ENCODE measurements at regions of chr21 and their contacts with region 1.

Region 1: GRCh38 chr21:43646550-43647260 is 12.6 kb downstream of the HSF2BP start:
- DNase-seq: peak; percentile 90 to 91
- ATAC-seq: peak; percentile 92 to 98 (median 96)
- H3K4me3 ChIP-seq: no peak overlapping the region
- H3K27ac ChIP-seq: peak overlapping the region in 6 of 10 donors; percentile 46 to 73 (median 70)
- H3K4me1 ChIP-seq: peaks cover 0 to 25% (median 15%) of the 10 kb centered on the region in 9 donors
- H3K27me3 ChIP-seq: no peaks in the 10 kb centered on the region
- CTCF ChIP-seq: peak; percentile 96 to 100 (median 99)

Region 2: GRCh38 chr21:42913476-42913875 is 733.2 kb before region 1 on chr21:
- intact Hi-C with region 1: loop called in 1 of 10 experiments (anchors 10 kb)
- DNase-seq: no peak
- ATAC-seq: peak in 3 of 8 donors; percentile 7 to 32 (median 32)
- H3K4me3 ChIP-seq: no peak overlapping the region
- H3K27ac ChIP-seq: no peak overlapping the region
- H3K4me1 ChIP-seq: no peaks in the 10 kb centered on the region
- H3K27me3 ChIP-seq: no peaks in the 10 kb centered on the region
- CTCF ChIP-seq: no peak

Region 3: GRCh38 chr21:42923541-42924432 is 722.9 kb before region 1 on chr21:
- intact Hi-C with region 1: loop called in 2 of 10 experiments (anchors 10 kb)
- DNase-seq: peak; percentile 25 to 73
- ATAC-seq: peak; percentile 72 to 93 (median 86)
- H3K4me3 ChIP-seq: peak overlapping the region in 2 of 10 donors; percentile 6 to 7
- H3K27ac ChIP-seq: peak overlapping the region in 1 of 10 donors; percentile 44
- H3K4me1 ChIP-seq: peaks cover 0 to 12% (median 4%) of the 10 kb centered on the region in 9 donors
- H3K27me3 ChIP-seq: no peaks in the 10 kb centered on the region
- CTCF ChIP-seq: peak; percentile 50 to 83 (median 74)

Region 4: DNA sequence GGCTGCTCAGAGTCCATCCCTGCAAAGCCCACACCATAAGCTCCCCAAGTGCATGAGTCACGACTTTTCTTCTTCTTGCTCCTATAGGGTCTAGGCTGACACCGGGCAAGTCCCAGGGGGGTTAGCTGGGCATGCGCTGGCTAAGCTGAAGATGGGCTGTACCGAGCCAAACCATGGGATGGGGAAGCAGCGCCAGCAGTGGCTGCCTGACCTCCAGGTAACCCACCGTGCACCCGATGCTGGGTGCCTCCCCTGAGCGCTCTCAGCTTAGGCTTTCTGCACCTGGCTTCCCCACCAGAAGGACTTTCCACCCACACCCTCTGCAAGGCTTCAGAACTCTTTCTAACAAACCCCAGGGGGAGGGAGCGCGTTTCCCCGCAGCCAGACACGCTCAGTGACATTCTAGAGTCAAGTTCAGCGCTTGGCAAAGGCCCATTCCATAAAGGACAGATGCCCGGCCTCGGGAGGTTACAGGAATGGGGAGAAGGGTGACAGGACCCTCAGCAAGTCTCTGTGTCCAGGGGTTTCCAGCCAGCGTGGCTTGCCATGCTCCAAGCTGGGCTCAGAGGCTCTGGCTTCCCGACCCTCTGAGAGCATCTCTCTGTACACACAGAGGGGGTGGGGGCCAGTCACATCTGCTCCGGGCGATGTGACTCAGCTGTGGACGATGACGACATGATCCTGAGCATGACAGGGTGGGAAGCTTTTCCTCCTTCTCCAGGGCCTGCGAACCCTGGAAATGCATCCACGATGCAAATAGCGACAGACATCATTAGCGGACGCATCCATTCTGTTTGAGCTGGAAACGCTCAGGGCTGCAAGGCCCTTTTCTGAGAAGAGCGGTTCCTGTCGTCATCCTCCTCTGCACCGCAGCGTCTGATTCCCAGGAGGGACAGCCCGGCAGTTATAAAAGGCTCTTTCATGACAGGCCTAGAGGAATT is 327.6 kb before region 1 on chr21:
- intact Hi-C with region 1: loop called in 2 of 10 experiments (anchors 10 kb)
- DNase-seq: peak; percentile 19 to 75
- ATAC-seq: peak in 7 of 8 donors; percentile 40 to 74 (median 58)
- H3K4me3 ChIP-seq: no peak overlapping the region
- H3K27ac ChIP-seq: peak overlapping the region in 7 of 10 donors; percentile 36 to 75 (median 46)
- H3K4me1 ChIP-seq: peaks cover 0 to 26% (median 9%) of the 10 kb centered on the region in 9 donors
- H3K27me3 ChIP-seq: peaks cover 0 to 9% (median 5%) of the 10 kb centered on the region in 7 donors
- CTCF ChIP-seq: no peak

Region 5: GRCh38 chr21:43345746-43346409 is 300.8 kb before region 1 on chr21:
- intact Hi-C with region 1: loop called in 2 of 10 experiments (anchors 10 kb)
- DNase-seq: no peak
- ATAC-seq: no peak
- H3K4me3 ChIP-seq: no peak overlapping the region
- H3K27ac ChIP-seq: peak overlapping the region in 1 of 10 donors; percentile 71
- H3K4me1 ChIP-seq: peaks cover 8 to 41% (median 16%) of the 10 kb centered on the region in 9 donors
- H3K27me3 ChIP-seq: no peaks in the 10 kb centered on the region
- CTCF ChIP-seq: no peak

Region 6: DNA sequence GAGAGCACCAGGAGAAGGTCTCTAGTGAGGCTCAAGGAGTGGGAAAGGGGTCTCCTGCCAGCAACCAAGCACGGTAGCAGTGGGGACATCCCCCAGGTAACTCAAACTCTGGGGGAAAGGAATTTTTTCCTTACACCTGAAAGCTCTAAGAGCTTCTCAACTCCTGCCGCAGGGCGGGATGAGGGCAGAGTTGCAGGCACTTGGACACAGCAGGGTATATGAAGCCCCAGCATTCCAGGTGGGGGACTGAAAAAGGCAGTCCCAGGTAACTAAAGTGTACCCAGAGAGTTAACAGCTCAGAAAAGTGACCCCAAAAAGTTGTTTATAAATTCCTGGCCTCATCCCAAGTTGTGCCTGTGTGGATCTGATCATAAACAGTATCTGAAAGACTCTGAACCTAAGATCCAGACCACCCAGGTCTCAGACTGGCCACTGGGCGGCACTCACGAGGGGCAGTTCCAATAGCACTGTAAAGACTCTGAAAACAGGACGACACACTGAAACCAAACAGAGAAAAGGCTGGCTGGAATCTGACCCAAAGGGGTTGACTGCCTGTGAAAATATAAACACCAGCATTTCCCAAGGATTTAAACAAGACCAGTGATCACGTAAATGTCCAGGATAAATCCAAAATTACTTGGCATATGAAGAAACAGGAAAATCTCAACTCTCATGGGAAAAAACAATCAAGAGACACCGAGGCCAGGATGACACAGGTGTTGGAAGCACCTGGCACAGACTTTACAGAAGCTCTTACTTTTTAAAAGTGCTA is 34.9 kb before region 1 on chr21:
- intact Hi-C with region 1: loop called in 2 of 10 experiments (anchors 2 to 5 kb)
- DNase-seq: peak; percentile 67
- ATAC-seq: peak; percentile 61 to 88 (median 84)
- H3K4me3 ChIP-seq: no peak overlapping the region
- H3K27ac ChIP-seq: peak overlapping the region in 1 of 10 donors; percentile 13
- H3K4me1 ChIP-seq: peaks cover 0 to 21% (median 15%) of the 10 kb centered on the region in 9 donors
- H3K27me3 ChIP-seq: no peaks in the 10 kb centered on the region
- CTCF ChIP-seq: peak; percentile 56 to 86 (median 72)

Region 7: DNA sequence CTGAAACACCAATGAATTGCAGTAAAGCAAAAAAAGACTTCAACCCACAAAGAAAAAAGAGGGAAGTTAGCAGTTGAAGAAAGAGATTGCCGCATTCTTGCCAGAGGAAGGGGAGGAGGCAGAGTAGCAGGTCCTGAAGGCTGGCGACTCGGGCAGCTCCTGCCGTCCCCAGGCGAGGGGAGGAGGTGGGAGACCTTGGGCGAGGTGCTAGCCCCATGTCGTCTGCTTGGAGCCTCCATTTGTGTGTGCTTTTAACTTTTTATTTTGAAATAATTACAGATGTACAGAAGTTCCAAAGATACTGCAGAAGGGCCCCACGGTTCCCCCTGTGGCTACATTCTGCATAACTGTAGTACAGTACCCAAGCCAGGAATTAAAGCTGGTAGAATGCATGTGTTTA is 713.5 kb after region 1 on chr21:
- intact Hi-C with region 1: no loop called
- DNase-seq: no peak
- ATAC-seq: no peak
- H3K4me3 ChIP-seq: no peak overlapping the region
- H3K27ac ChIP-seq: peak overlapping the region in 1 of 10 donors; percentile 19
- H3K4me1 ChIP-seq: peaks cover 0 to 37% (median 0%) of the 10 kb centered on the region in 9 donors
- H3K27me3 ChIP-seq: peaks cover 0 to 8% (median 0%) of the 10 kb centered on the region in 7 donors
- CTCF ChIP-seq: no peak